MCF 10A (cell line): ENCODE measurements at regions of chr17 and their contacts with region 1.

Region 1: GRCh38 chr17:50151041-50151936 is 812 bp upstream of the PPP1R9B start:
- DNase-seq: peak; percentile 92
- H3K4me3 Mint-ChIP-seq: peak overlapping the region; percentile 82
- H3K27ac Mint-ChIP-seq: peak overlapping the region; percentile 80
- H3K4me1 Mint-ChIP-seq: peaks cover 26% of the 10 kb centered on the region
- H3K27me3 Mint-ChIP-seq: no peaks in the 10 kb centered on the region
- CTCF ChIP-seq: peak; percentile 52

Region 2: GRCh38 chr17:50026901-50027630 is 124.2 kb before region 1 on chr17:
- CTCF ChIA-PET with region 1: interaction called, 3 read pairs
- POLR2A ChIA-PET with region 1: interaction called, 8 read pairs
- intact Hi-C with region 1: loop called (anchors 1 kb)
- DNase-seq: peak; percentile 89
- H3K4me3 Mint-ChIP-seq: peak overlapping the region; percentile 82
- H3K27ac Mint-ChIP-seq: peak overlapping the region; percentile 84
- H3K4me1 Mint-ChIP-seq: peaks cover 22% of the 10 kb centered on the region
- H3K27me3 Mint-ChIP-seq: no peaks in the 10 kb centered on the region
- CTCF ChIP-seq: peak; percentile 91

Region 3: GRCh38 chr17:50064258-50065001 is 86.9 kb before region 1 on chr17:
- CTCF ChIA-PET with region 1: no interaction called
- POLR2A ChIA-PET with region 1: interaction called, 24 read pairs
- intact Hi-C with region 1: no loop called
- DNase-seq: peak; percentile 99
- H3K4me3 Mint-ChIP-seq: peak overlapping the region; percentile 63
- H3K27ac Mint-ChIP-seq: peak overlapping the region; percentile 95
- H3K4me1 Mint-ChIP-seq: peaks cover 59% of the 10 kb centered on the region
- H3K27me3 Mint-ChIP-seq: no peaks in the 10 kb centered on the region
- CTCF ChIP-seq: no peak

Region 4: GRCh38 chr17:50139950-50140871 is 11.1 kb before region 1 on chr17:
- CTCF ChIA-PET with region 1: interaction called, 16 read pairs
- POLR2A ChIA-PET with region 1: interaction called, 5 read pairs
- intact Hi-C with region 1: no loop called
- DNase-seq: peak; percentile 73
- H3K4me3 Mint-ChIP-seq: no peak overlapping the region
- H3K27ac Mint-ChIP-seq: no peak overlapping the region
- H3K4me1 Mint-ChIP-seq: peaks cover 13% of the 10 kb centered on the region
- H3K27me3 Mint-ChIP-seq: no peaks in the 10 kb centered on the region
- CTCF ChIP-seq: peak; percentile 91

Region 5: GRCh38 chr17:50177983-50178834 is 26.9 kb after region 1 on chr17:
- CTCF ChIA-PET with region 1: interaction called, 9 read pairs
- POLR2A ChIA-PET with region 1: interaction called, 35 read pairs
- intact Hi-C with region 1: no loop called
- DNase-seq: peak; percentile 98
- H3K4me3 Mint-ChIP-seq: peak overlapping the region; percentile 15
- H3K27ac Mint-ChIP-seq: peak overlapping the region; percentile 52
- H3K4me1 Mint-ChIP-seq: peaks cover 42% of the 10 kb centered on the region
- H3K27me3 Mint-ChIP-seq: no peaks in the 10 kb centered on the region
- CTCF ChIP-seq: peak; percentile 33

Region 6: DNA sequence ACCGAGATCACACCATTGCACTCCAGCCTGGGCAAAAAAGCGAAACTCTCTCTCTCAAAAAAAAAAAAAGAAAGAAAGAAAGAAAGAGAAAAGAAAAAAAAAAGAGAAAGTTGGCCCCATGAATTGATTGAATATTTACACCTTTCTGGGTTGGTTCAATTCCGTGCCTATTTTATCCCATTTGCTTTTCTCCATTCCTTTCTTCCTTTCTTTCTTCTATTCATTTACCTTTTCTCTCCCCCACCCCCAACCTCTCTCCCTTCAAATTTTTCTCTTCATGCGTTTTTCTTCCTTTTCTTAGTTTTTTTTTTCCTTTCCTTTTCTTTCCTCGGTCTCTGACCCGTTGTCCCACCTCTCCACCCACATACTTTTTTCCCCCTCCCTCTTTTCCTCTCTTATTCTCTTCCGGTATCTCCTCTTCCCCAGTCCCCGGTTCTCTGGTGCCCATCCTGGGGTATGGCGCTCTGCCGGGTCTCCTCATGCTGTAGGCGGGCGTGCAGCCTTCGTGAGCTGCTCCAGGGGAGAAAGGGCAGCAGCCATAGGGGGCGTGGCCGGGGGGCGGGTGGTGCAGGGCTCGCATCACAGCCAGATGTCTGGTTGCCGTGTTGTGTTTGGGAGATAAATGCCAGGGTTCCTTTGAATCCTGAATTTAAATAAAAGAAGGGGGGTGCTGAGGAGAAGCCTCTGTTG is 55.5 kb after region 1 on chr17:
- CTCF ChIA-PET with region 1: no interaction called
- POLR2A ChIA-PET with region 1: no interaction called
- intact Hi-C with region 1: no loop called
- DNase-seq: no peak
- H3K4me3 Mint-ChIP-seq: no peak overlapping the region
- H3K27ac Mint-ChIP-seq: no peak overlapping the region
- H3K4me1 Mint-ChIP-seq: peaks cover 18% of the 10 kb centered on the region
- H3K27me3 Mint-ChIP-seq: peaks cover 16% of the 10 kb centered on the region
- CTCF ChIP-seq: no peak